Activated naive CD4-positive, alpha-beta T cell treated with anti-CD3 and anti-CD28 coated beads for 36 hours (primary cell): ENCODE measurements at regions of chr17 and their contacts with region 1.

Region 1: DNA sequence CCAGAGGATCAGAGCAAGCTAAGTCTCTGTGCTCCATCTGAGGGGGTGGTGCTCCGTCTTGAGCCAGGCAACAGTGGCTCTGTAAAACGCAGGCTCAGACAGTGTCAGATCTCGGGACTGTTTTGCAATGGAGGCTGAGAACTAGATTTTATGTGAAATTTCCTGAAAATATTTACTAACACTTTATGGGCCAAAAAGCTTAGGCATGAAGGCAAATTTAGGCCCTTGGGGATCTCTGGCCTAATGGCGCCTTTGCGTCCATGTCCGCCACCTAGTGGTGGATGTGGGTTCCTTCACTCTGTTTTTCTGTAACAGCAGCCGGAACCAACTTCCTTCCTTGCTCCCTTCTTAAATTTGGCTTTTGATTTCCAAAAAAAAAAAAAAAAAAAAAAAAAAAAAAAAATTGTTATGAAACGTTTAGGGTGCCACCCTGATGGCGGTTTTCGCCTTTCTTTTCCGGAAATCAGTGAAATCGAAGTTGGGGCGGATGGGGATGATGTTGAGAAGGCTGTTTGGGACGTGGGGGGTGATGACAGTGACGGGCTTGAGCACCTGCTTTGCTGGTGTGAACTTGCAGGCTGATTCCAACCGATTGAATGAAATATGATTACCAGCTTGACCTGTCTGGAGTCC is 14.0 kb upstream of the ELAC2 start:
- DNase-seq: peak; percentile 63
- H3K4me3 Mint-ChIP-seq: no peak overlapping the region
- H3K27ac Mint-ChIP-seq: no peak overlapping the region
- H3K4me1 Mint-ChIP-seq: peaks cover 11% of the 10 kb centered on the region
- H3K27me3 Mint-ChIP-seq: no peaks in the 10 kb centered on the region

Region 2: GRCh38 chr17:12620200-12620720 is 411.6 kb before region 1 on chr17:
- CTCF ChIA-PET with region 1: no interaction called
- intact Hi-C with region 1: no loop called
- DNase-seq: no peak
- H3K4me3 Mint-ChIP-seq: no peak overlapping the region
- H3K27ac Mint-ChIP-seq: no peak overlapping the region
- H3K4me1 Mint-ChIP-seq: no peaks in the 10 kb centered on the region
- H3K27me3 Mint-ChIP-seq: peaks cover 7% of the 10 kb centered on the region

Region 3: DNA sequence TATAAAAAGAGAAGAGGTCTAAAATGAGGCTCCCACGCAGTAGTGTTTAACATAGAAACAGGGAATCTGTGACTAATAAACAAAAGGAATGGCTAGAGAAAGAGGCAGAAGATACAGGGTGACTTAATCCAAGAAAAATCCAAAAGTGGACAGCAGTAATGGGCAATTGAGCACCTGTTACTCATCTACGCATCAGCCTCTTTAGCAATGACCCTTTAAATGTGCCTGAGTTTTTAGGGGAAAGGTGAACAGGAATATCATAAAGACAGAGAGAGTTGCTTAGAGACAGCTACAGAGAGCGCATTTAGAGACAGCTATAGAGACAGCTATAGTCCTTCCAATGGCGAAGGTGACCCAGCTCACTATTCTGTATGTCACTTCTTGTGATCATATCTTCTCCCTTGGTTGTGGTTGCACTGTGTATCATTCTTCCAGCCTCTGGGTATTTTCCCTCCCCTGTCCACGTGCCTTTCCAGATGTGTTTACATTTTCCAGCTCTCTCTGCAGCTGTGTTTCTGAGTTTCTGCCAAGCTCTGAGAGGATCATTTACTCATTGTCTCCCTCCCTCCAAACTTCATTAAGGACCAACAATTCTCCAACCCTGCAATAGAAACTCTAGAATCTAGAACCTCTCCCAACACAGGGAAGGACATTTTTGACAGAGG is 304.6 kb before region 1 on chr17:
- CTCF ChIA-PET with region 1: no interaction called
- intact Hi-C with region 1: no loop called
- DNase-seq: no peak
- H3K4me3 Mint-ChIP-seq: no peak overlapping the region
- H3K27ac Mint-ChIP-seq: no peak overlapping the region
- H3K4me1 Mint-ChIP-seq: no peaks in the 10 kb centered on the region
- H3K27me3 Mint-ChIP-seq: no peaks in the 10 kb centered on the region

Region 4: DNA sequence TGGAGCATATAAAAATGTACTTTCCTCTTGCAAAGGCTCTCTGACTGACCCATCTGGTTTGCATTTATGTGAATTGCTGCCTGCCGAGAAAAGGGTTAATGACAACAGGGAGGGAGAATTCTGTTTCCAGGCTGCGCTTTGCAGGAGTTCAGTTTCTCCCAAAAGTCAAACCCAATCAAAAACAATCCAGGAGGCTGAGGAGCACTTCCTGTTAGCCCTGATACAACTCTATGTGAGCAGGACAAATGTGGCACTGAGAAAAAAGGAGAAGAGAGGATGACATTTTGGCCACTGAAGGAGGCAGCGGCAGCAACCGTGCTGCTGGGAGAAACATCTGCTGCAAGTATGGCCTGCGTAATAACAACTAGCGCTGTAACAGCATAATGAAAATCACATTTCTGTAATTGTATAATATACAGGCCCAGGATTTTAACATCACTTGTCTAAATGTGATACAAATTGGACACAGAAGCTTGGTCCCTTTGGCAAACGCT is 12.8 kb after region 1 on chr17:
- CTCF ChIA-PET with region 1: interaction called, 19 read pairs
- intact Hi-C with region 1: no loop called
- DNase-seq: no peak
- H3K4me3 Mint-ChIP-seq: no peak overlapping the region
- H3K27ac Mint-ChIP-seq: no peak overlapping the region
- H3K4me1 Mint-ChIP-seq: no peaks in the 10 kb centered on the region
- H3K27me3 Mint-ChIP-seq: peaks cover 2% of the 10 kb centered on the region

Region 5: DNA sequence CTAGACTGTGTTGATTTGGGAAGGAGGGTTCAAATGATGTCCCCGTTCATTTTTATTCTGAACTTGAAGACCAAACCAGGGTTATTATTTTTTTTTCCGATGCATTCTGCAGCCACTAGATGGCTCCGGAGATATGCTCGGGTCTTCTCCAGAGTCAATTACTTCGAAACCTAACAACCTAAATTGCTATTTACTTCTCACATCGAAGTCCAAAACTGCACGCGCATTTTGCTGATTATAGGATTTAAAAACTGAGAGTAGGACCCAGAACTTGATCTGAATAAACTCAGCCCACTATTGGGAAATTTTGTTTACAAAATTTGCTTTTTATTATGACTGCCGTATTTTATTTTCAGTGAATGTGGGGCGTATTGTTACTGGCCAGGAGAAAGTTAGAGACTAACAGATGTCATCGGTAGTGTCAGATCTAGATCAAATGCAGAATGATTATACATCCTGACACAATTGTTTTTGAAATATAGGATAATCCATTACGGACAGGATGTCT is 306.1 kb after region 1 on chr17:
- CTCF ChIA-PET with region 1: interaction called, 5 read pairs
- intact Hi-C with region 1: loop called (anchors 5 kb)
- DNase-seq: peak; percentile 43
- H3K4me3 Mint-ChIP-seq: peak overlapping the region; percentile 8
- H3K27ac Mint-ChIP-seq: no peak overlapping the region
- H3K4me1 Mint-ChIP-seq: peaks cover 6% of the 10 kb centered on the region
- H3K27me3 Mint-ChIP-seq: peaks cover 34% of the 10 kb centered on the region

Region 6: DNA sequence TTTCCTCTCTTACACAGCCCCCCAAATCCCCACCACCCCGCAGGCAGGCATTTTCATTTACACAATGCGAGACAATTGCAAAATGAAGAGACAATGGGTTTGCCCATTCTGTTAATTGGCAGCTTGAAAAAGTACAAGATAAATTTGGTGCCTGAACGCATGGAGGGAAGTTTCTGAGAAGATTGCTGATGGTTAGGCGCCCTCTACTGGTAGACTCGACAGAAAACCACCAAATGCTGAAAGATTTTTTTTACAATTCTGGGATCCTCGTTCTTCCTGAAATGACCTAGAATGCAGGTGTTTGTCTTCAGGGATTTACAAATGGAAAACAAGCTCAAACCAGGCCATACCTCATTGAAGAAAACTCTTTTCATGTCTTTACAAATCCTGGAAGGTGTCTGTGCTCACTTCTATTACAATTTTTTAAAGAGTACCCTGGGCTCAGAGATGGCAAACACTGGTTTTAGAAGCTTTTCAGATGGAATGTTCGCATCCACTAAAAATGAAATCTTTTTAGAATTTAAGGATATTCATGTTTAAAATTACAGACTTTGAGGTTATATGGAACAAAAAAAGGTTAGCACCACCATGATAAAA is 1894.8 kb after region 1 on chr17:
- CTCF ChIA-PET with region 1: interaction called, 4 read pairs
- intact Hi-C with region 1: loop called (anchors 2 kb)
- DNase-seq: peak; percentile 72
- H3K4me3 Mint-ChIP-seq: no peak overlapping the region
- H3K27ac Mint-ChIP-seq: no peak overlapping the region
- H3K4me1 Mint-ChIP-seq: no peaks in the 10 kb centered on the region
- H3K27me3 Mint-ChIP-seq: peaks cover 10% of the 10 kb centered on the region